SK-N-SH (cell line): ENCODE measurements at regions of chr7 and their contacts with region 1.

Region 1: GRCh38 chr7:30800785-30801252 is 29.6 kb downstream of the MINDY4 start:
- DNase-seq: peak; percentile 89
- H3K4me3 ChIP-seq: no peak overlapping the region
- H3K27ac ChIP-seq: peak overlapping the region in 1 of 2 experiments; percentile 4; a peak in 2 of 4 replicates
- H3K4me1 ChIP-seq: peaks cover 24 to 51% of the 10 kb centered on the region in 2 experiments
- H3K27me3 ChIP-seq: no peaks in the 10 kb centered on the region
- CTCF ChIP-seq: peak; percentile 96
- EP300 ChIP-seq: no peak
- RAD21 ChIP-seq: peak; percentile 100

Region 2: GRCh38 chr7:30974605-30975255 is 173.9 kb after region 1 on chr7:
- CTCF ChIA-PET with region 1: interaction called, 25 read pairs
- POLR2A ChIA-PET with region 1: no interaction called
- DNase-seq: peak; percentile 76
- H3K4me3 ChIP-seq: no peak overlapping the region
- H3K27ac ChIP-seq: no peak overlapping the region
- H3K4me1 ChIP-seq: peaks cover 0 to 9% of the 10 kb centered on the region in 2 experiments; a peak in 1 of 4 replicates
- H3K27me3 ChIP-seq: peaks cover 34% of the 10 kb centered on the region; the same call in 1 of the 2 replicates
- CTCF ChIP-seq: peak; percentile 72
- EP300 ChIP-seq: no peak
- RAD21 ChIP-seq: peak; percentile 79